Right ventricle myocardium inferior (tissue), 1 donor: ENCODE measurements at regions of chr19 and their contacts with region 1.

Region 1: DNA sequence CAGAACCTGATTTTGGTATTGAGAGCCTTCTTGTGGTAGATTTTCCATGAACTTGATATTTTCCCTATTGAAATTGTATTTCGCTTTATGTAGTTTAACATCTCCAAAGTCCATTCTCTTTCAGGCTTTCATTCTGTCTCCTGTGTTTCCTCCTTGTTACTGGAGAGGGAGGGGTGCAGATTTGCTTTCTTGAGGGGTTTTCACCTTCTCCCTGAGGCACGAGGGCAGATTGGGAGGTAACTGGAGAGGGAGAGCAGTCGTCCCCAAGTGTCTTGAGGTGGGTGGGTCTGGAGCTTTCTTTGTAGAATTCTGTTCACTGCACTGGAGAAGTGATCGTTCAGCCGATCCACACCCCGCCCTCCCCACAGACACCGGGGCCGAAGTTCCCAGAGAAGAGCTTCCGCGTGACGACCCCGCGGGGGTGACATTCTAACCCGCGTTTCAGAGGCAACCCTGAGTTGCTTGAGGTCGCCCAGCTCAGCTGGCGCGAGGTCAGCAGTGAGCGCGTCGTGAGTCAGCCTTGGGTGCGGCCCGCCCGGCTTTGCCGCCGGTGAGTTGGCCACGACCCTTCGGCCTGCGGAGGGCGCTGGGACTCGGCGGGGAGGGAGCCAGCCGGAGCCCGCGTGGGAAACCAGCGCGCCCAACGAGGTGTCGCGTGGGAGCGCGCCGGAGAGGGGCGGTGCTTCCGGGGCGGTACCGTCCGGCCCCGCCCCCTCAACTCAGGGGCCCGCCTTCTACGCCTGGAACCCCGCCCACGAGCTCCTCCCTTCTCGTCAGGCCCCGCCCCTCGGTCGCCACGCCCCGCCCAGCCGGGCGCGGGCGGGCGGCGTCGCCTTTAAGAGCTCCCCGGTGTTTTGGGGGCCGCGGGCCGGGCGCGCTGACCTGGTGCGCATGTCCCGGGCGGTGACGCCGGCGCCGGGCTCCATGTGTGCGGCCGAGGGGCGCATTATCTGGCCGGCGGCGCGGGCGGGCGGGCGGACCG is at the start of gene GATAD2A:
- DNase-seq: peak; percentile 97
- ATAC-seq: peak; percentile 97
- total RNA-seq, gene GATAD2A: 25.9 TPM

Region 2: DNA sequence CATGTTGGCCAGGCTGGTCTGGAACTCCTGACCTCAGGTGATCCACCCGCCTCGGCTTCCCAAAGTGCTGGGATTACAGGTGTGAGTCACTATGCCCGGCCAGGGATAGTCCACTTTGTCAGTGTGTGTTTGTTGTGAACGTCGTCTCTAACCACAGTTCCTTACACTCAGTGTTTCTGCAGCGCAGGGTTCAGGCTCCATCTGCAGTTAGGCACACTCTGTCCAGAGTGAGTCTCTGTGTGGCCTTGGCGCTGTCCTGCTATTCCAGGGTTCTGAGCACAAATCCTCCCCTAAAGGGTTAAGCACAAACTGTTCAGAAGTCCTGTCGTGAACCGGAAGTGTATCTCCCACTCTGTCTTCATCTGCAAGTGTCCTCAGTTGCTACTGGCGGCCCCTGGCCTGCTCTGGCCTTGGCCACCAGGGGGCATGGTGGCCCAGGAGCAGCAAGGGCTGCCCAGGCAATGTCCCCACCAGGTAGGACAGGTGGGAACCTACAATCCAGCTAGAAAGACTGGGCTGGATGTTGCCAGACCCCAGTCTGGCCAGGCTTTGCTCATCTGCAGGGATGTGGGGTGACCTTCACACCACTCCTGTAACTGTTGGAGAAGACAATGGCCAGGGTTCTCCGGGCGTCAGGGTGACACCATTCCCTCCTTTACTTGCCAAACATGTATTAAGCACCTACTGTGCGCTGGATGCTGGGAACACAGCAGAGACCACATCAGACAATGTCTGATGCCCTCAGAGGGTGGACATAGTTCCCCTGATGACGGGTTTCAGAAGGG is 38.4 kb before region 1 on chr19:
- intact Hi-C with region 1: loop called (anchors 2 kb)
- DNase-seq: peak; percentile 84
- ATAC-seq: peak; percentile 78

Region 3: DNA sequence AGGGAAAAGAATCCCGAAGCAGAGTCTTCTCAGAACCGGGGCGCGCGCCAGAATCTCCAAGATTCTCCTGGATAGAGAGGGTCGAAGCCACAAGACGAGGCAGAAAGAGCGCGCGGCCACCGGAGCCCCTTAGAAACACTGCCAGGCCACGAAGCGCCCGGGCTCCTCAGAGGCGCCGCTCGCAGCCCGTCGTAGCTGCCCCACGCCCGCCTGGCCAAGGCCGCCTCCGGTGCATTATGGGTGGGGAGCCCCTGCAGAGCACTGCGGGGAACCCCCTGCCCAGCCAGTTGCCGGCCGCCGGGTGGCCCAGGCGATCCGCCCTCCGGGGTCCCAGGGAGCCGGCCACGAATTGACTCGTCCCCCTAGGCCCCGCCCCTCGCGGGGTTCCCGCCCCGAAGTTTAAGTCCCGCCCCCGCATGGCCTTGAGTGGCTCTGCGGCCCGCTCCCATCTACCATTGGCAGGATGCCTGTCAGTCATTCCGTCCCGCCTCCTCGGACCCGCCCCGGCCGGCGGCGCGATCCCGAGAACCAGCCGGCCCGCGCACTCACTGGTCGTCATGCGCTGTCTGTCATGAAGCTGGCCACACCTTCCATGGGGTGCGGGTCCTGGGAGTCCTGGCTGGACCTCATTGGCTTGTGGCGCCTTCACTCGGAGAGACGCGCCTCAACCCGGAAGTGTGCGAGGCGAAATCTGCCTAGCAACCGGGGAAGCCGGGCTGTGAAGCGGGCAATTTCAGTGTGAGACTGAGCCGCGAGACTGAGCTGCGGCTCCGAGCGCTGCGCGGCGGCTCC is 19.9 kb before region 1 on chr19:
- intact Hi-C with region 1: loop called (anchors 1 kb)
- DNase-seq: peak; percentile 100
- ATAC-seq: peak; percentile 98

Region 4: DNA sequence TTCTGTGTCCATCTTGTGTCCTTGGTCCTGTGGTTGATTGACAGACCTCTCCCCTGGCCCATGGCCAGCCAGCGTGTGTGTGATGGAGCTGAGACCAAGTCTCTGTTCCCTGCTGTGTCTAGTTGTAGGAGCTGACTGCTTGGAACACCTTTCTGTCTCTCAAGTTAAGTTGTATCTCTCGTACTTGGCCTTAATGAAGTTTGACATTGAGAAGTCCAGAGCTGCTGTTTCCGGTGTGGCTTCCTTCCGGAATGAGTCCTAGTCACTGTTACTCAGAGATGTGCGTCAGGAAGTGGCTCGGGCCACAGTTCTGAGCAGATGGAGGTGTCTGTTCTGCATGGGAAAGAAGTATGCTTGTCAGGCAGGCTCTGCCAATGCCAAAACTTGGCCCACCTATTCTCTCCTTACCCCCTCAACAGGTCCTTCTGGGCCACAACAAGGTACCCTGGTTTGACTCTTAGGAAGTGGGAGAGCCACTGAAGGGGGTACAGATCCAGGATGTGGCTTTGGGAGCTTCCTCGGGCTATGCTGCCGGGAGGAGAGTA is 54.6 kb after region 1 on chr19:
- intact Hi-C with region 1: loop called (anchors 5 kb)
- DNase-seq: peak; percentile 83
- ATAC-seq: peak; percentile 21

Region 5: DNA sequence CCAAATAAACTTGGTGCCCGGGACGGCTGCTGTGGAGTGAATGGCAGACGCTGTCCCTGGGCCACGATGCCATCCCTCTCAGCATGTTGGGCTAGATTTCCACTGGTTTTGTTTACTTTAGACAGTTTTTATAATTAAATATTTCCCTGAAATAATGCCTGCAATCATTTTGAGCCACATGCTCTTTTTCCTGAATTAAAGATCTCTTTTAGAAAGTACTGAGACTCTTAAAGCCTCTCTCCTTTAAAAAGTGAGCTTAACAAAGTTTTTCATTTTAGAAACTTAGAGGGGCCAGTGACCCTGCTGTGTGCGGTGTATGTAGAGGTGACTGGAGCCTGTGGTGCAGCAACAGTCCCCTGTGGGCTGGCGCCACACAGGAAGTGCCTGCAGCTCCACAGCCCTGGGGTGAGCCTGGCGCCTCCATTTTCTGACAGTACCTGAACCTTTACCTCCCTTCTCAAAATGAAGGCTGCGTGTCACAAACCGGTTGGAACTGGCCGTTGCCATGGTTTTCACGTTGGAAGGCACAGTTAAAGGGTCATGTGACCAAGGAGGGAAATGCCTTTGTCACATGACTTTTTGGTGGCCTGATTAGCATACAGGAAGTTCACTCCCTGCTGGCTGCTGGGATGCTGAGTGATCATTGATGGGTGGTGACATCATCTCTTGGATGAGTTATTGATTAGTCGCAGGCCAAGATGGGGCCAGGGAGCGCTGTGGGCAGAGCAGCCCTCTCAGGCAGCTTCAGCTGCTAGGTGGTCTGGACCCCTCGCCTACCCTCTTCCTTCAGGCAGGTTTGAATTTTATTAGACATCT is 83.9 kb after region 1 on chr19:
- intact Hi-C with region 1: loop called (anchors 5 kb)
- DNase-seq: peak; percentile 90
- ATAC-seq: peak; percentile 61

Region 6: GRCh38 chr19:19618219-19619051 is 213.3 kb after region 1 on chr19 and contains the start of gene PBX4:
- intact Hi-C with region 1: no loop called
- DNase-seq: peak; percentile 97
- ATAC-seq: peak; percentile 95
- total RNA-seq, gene PBX4: not detected